Ascending aorta (tissue), 2 donors: ENCODE measurements at regions of chrX and their contacts with region 1.

Region 1: GRCh38 chrX:155819966-155820491 is 61.1 kb upstream of the VAMP7 start:
- DNase-seq: peak in 1 of 2 donors; percentile 68
- H3K4me3 ChIP-seq: no peak overlapping the region
- H3K27ac ChIP-seq: no peak overlapping the region
- H3K4me1 ChIP-seq: no peaks in the 10 kb centered on the region
- H3K27me3 ChIP-seq: no peaks in the 10 kb centered on the region
- CTCF ChIP-seq: peak; percentile 39 to 55 (median 51)

Region 2: DNA sequence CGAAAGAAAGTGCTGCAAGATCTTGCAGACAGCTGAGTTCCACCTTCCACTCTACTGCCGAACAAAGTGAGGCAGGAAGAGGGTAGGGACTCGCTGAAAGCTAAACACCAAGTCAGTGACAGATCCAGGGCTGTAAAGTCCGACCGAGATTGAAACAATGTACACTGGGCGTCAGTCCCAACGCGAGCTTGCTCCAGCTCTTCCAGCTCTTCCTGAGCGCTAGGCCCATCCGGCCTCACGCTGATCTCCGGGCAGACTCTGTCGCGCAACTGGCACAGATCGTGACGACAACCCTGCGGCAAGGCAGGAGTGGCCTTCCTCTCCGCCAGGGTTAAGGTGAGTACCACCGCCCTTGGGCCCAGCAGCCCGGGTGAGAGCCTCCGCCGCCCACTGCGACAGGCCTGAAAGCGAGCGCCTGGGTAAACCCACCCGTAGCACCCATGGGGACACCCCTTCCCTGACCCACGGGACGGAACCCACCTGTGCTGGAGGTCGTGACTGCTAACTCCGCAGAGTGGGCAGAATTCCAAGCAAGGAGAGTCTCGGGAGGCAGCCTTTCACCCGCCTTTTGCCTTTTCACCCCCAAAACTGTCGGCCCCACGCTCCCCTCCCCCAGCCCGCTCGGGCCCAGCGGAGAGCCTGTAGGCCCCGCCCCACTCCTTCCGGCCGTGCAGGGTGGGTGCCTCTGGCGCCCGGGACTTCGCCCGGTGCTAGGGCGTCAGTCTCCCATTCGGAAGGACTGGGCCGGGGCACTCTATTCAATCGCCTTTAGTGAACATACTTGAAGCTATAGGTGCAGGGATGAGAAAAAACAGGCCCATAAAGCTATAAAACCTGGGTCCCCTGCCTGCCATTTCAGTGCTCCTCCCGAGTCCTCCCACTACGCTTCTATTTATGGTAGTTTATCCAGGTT is 207.5 kb before region 1 on chrX and contains the start of gene TMLHE:
- intact Hi-C with region 1: loop called (anchors 10 kb)
- DNase-seq: peak; percentile 9 to 75
- H3K4me3 ChIP-seq: peak within 1 kb of the TSS; percentile 66 to 75
- H3K27ac ChIP-seq: peak within 1 kb of the TSS; percentile 86 to 88
- H3K4me1 ChIP-seq: no peaks in the 10 kb centered on the region
- H3K27me3 ChIP-seq: no peaks in the 10 kb centered on the region
- CTCF ChIP-seq: no peak
- total RNA-seq, gene TMLHE: 8.8 TPM

Region 3: DNA sequence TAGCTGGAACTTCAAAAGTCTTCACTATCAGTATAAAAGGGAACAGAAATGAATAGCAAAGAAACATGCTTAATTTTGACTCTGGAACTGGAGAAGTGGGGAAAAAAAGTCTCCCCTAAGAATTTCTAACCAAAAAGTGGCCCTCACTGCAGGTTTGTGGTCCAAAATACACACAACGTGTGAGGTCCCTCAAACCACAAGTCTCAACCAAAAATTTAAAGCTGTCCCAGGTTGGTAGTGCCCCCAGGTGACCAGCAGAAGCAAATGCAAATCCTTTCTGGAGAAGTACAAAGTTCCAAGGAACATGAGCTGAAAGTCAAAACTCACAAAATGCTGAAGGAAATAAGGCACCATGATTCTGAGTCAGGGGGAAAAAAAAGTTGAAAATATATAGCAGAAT is 37.5 kb after region 1 on chrX:
- intact Hi-C with region 1: no loop called
- DNase-seq: no peak
- H3K4me3 ChIP-seq: no peak overlapping the region
- H3K27ac ChIP-seq: no peak overlapping the region
- H3K4me1 ChIP-seq: no peaks in the 10 kb centered on the region
- H3K27me3 ChIP-seq: no peaks in the 10 kb centered on the region
- CTCF ChIP-seq: peak in 1 of 3 experiments; percentile 14

Region 4: GRCh38 chrX:155938132-155938531 is 118.1 kb after region 1 on chrX:
- intact Hi-C with region 1: no loop called
- DNase-seq: no peak
- H3K4me3 ChIP-seq: no peak overlapping the region
- H3K27ac ChIP-seq: no peak overlapping the region
- H3K4me1 ChIP-seq: no peaks in the 10 kb centered on the region
- H3K27me3 ChIP-seq: no peaks in the 10 kb centered on the region
- CTCF ChIP-seq: no peak